ENCODE measurements at regions of chr4 and their contacts with region 1.

Region 1: DNA sequence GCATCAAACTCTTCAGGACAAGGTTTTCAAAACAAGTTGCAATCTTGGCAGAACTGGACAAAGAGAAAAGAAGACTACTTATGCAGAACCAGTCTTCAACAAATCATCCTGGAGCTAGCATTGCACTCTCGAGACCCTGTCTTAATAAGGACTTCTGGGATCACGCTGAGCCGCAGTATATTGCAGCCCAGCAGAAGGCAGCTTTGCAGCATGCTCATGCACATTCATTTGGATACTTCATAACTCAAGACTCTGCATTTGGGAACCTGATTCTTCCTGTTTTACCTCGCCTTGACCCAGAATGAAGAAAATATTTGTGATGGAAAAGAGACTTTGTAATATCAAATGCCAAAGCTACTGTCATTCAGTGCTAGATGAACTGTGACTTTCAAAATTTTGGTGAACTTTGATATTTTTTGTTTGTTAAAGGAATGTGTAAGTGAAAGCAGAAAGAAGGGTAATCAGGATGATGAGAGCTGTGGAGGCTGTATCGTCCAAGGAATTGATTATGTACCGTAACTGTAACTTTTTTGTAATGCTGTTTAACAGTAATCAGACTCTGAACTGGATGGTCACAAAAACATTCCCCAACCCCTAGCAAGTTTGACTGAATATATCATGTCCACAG is 27.2 kb downstream of the HSPA4L start:
- DNase-seq: no peak
- ATAC-seq: 0 out of 3 replicates have a peak, but pooled peaks have one; percentile 16
- H3K4me3 ChIP-seq: no peak overlapping the region
- H3K27ac ChIP-seq: no peak overlapping the region
- H3K4me1 ChIP-seq: no peaks in the 10 kb centered on the region
- H3K27me3 ChIP-seq: no peaks in the 10 kb centered on the region
- CTCF ChIP-seq: peak in 1 of 3 experiments; percentile 38; a peak in 2 of 6 replicates
- EP300 ChIP-seq: no peak
- POLR2A ChIP-seq: no peak
- RAD21 ChIP-seq: peak; percentile 35

Region 2: DNA sequence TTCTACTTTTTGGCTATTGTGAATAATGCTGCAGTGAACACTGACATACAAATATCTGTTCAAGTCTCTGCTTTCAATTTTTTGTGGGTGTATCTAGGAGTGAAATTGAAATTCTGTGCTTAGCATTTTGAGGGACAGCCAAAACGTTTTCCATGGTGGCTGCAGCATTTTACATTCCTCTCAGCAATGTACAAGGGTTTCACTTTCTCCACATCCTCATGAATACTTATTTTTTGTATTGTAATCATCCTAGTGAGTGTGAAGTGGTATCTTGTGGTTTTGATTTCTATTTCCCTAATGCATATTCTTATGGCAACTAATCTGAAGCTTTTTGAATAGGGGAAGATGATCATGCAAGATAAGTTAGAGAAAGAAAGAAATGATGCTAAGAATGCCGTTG is 13.1 kb after region 1 on chr4:
- CTCF ChIA-PET with region 1: no interaction called
- POLR2A ChIA-PET with region 1: no interaction called
- RAD21 ChIA-PET with region 1: no interaction called
- SMC1A ChIA-PET with region 1: interaction called, 12 read pairs
- in situ Hi-C with region 1: no loop called
- intact Hi-C with region 1: no loop called
- DNase-seq: no peak
- ATAC-seq: no peak
- H3K4me3 ChIP-seq: no peak overlapping the region
- H3K27ac ChIP-seq: no peak overlapping the region
- H3K4me1 ChIP-seq: no peaks in the 10 kb centered on the region
- H3K27me3 ChIP-seq: no peaks in the 10 kb centered on the region
- CTCF ChIP-seq: no peak
- EP300 ChIP-seq: no peak
- POLR2A ChIP-seq: no peak
- RAD21 ChIP-seq: no peak

Measured in GM12878 (cell line).